ENCODE measurements at regions of chr7 and their contacts with region 1.

Region 1: DNA sequence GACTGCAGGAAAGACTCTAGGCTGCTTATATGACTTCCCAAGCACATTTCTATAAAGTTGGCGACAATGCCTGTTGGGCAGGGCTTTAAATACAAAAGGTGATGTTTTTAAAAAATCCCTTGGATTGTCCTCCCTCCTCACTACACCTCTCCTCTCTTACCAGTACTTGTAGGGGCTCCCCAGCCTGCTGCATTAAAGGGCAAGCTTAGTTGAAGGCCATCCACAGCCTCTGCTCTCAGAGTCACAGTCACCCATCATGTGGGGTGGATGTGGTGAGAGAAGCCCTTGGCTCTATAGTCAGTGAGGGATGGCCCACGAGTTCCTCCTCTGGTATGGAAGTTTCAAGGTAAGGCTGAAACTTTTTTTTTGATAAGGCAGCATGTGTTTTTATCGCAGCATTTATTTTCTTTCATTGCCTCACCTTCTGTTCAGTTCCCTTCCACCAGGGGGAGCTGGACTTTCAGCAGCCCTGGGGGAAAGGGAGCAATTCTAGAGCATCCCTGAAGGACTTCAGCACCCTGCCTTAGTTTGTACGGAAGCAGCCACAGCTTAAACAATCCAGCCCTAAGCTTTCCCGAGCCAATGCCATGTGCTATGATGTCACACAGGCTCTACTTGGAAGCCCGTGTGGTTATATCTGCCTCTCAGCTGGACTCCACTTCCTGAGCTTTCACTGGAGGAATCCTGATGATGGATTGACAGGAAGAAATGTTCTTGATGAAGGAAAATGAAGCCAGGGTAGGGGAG is 131.9 kb downstream of the CALCR start:
- DNase-seq: peak; percentile 17 to 81
- H3K4me3 ChIP-seq: no peak overlapping the region
- H3K27ac ChIP-seq: no peak overlapping the region
- H3K4me1 ChIP-seq: no peaks in the 10 kb centered on the region
- H3K27me3 ChIP-seq: no peaks in the 10 kb centered on the region
- CTCF ChIP-seq: peak; percentile 72 to 90 (median 83)
- EP300 ChIP-seq: no peak
- POLR2A ChIP-seq: no peak
- RAD21 ChIP-seq: peak; percentile 75 to 77

Region 2: GRCh38 chr7:93245525-93246432 is 196.9 kb before region 1 on chr7:
- CTCF ChIA-PET with region 1: interaction called, 17 read pairs
- POLR2A ChIA-PET with region 1: no interaction called
- DNase-seq: no peak
- H3K4me3 ChIP-seq: no peak overlapping the region
- H3K27ac ChIP-seq: no peak overlapping the region
- H3K4me1 ChIP-seq: no peaks in the 10 kb centered on the region
- H3K27me3 ChIP-seq: no peaks in the 10 kb centered on the region
- CTCF ChIP-seq: peak in 2 of 3 experiments; percentile 20 to 23; a peak in 2 of 4 replicates
- EP300 ChIP-seq: no peak
- POLR2A ChIP-seq: no peak
- RAD21 ChIP-seq: peak; percentile 63 to 71

Region 3: DNA sequence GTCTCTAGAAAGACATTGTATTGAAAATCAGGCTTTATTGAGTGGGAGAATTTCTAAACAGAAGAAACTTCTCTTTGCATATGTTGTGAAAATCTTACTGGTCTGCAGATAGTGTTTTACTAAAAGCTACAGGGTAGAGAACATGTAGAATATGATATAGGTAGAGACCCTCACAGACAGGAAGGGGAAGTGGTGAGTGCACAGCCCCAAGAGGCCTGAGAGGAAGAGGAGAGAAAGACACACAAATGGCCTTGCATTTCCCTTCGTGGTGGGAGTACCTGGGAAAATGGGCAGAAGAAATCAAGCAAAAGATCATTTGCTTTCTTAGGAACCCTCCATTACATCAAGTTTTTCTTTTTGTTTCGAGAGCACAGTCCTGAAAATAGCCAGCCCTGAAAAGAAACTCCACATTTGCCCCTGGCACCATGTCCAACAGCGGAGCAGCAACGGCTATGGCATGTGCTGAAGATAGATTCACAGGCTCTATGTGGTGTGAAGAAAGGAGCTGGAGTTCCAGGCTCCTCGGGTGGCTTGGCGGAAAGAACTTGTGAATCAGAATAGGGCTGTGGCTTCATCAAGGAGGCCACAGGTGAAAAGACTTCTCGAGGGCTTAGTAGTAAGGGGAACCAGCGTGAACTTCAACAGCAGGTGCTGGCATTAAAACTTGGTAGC is 11.6 kb before region 1 on chr7:
- CTCF ChIA-PET with region 1: interaction called, 19 read pairs
- POLR2A ChIA-PET with region 1: no interaction called
- DNase-seq: no peak
- H3K4me3 ChIP-seq: no peak overlapping the region
- H3K27ac ChIP-seq: no peak overlapping the region
- H3K4me1 ChIP-seq: no peaks in the 10 kb centered on the region
- H3K27me3 ChIP-seq: no peaks in the 10 kb centered on the region
- CTCF ChIP-seq: no peak
- EP300 ChIP-seq: no peak
- POLR2A ChIP-seq: no peak
- RAD21 ChIP-seq: no peak

Region 4: DNA sequence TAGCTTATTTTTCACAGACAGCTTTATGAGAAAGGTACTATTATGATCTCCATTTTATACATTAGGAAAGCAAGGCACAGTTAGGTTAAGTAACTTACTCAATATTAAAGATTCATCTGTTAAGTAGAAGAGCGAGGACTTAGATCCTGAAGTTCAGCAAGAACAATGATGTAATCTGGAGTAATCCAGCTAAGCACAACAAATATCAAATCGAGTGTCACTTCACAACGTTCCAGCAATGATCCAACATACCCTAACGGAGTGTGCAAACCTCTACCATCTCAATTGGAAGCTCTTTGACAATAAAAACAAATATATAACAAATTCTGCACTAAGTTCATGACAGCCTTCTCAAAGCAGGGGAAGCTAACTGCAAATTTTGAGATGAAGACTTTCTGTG is 10.6 kb after region 1 on chr7:
- CTCF ChIA-PET with region 1: interaction called, 16 read pairs
- POLR2A ChIA-PET with region 1: no interaction called
- DNase-seq: no peak
- H3K4me3 ChIP-seq: no peak overlapping the region
- H3K27ac ChIP-seq: no peak overlapping the region
- H3K4me1 ChIP-seq: no peaks in the 10 kb centered on the region
- H3K27me3 ChIP-seq: no peaks in the 10 kb centered on the region
- CTCF ChIP-seq: no peak
- EP300 ChIP-seq: no peak
- POLR2A ChIP-seq: no peak
- RAD21 ChIP-seq: no peak

Region 5: GRCh38 chr7:93461350-93461749 is 18.7 kb after region 1 on chr7:
- CTCF ChIA-PET with region 1: interaction called, 18 read pairs
- POLR2A ChIA-PET with region 1: no interaction called
- DNase-seq: no peak
- H3K4me3 ChIP-seq: no peak overlapping the region
- H3K27ac ChIP-seq: no peak overlapping the region
- H3K4me1 ChIP-seq: peaks cover 0 to 2% (median 0%) of the 10 kb centered on the region in 4 experiments; a peak in 1 of 7 replicates
- H3K27me3 ChIP-seq: no peaks in the 10 kb centered on the region
- CTCF ChIP-seq: peak in 2 of 3 experiments; percentile 45 to 48; a peak in 2 of 4 replicates
- EP300 ChIP-seq: no peak
- POLR2A ChIP-seq: no peak
- RAD21 ChIP-seq: peak; percentile 80

Region 6: GRCh38 chr7:93544691-93545090 is 102.0 kb after region 1 on chr7:
- CTCF ChIA-PET with region 1: interaction called, 77 read pairs
- POLR2A ChIA-PET with region 1: no interaction called
- DNase-seq: no peak
- H3K4me3 ChIP-seq: no peak overlapping the region
- H3K27ac ChIP-seq: no peak overlapping the region
- H3K4me1 ChIP-seq: peaks cover 0 to 5% (median 2%) of the 10 kb centered on the region in 4 experiments; a peak in 3 of 7 replicates
- H3K27me3 ChIP-seq: no peaks in the 10 kb centered on the region
- CTCF ChIP-seq: no peak
- EP300 ChIP-seq: no peak
- POLR2A ChIP-seq: no peak
- RAD21 ChIP-seq: no peak

Region 7: GRCh38 chr7:93551063-93551904 is 108.6 kb after region 1 on chr7:
- CTCF ChIA-PET with region 1: interaction called, 77 read pairs
- POLR2A ChIA-PET with region 1: interaction called, 5 read pairs
- DNase-seq: no peak
- H3K4me3 ChIP-seq: no peak overlapping the region
- H3K27ac ChIP-seq: no peak overlapping the region
- H3K4me1 ChIP-seq: peaks cover 0 to 2% (median 0%) of the 10 kb centered on the region in 4 experiments; a peak in 1 of 7 replicates
- H3K27me3 ChIP-seq: no peaks in the 10 kb centered on the region
- CTCF ChIP-seq: peak in 2 of 3 experiments; percentile 67 to 69; a peak in 3 of 4 replicates
- EP300 ChIP-seq: no peak
- POLR2A ChIP-seq: no peak
- RAD21 ChIP-seq: peak; percentile 81 to 82